Ascending aorta (tissue), 2 donors: ENCODE measurements at regions of chr10 and their contacts with region 1.

Region 1: DNA sequence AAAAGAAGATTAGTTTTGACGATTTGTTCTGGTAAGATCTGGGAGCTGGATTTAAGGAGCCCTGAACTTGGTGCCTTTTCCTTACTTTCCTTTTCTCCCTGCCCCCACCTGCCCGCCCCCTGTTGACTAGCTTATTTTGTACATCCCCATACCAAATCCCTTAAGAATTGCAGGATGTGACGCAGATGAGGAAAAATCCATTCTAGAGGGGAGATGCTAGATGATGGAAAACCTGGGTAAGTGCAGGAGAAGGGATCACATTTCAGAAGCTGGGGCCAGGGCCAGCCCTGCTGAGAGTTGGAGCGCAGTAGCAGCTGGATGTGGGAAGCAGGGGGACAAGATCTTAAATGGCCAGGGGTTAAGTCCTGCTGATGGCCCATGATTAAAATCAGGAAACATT is 93.9 kb downstream of the CCDC3 start:
- DNase-seq: no peak
- H3K4me3 ChIP-seq: no peak overlapping the region
- H3K27ac ChIP-seq: peak overlapping the region; percentile 90 to 91
- H3K4me1 ChIP-seq: peaks cover 4 to 31% of the 10 kb centered on the region in 2 donors
- H3K27me3 ChIP-seq: no peaks in the 10 kb centered on the region
- CTCF ChIP-seq: no peak

Region 2: DNA sequence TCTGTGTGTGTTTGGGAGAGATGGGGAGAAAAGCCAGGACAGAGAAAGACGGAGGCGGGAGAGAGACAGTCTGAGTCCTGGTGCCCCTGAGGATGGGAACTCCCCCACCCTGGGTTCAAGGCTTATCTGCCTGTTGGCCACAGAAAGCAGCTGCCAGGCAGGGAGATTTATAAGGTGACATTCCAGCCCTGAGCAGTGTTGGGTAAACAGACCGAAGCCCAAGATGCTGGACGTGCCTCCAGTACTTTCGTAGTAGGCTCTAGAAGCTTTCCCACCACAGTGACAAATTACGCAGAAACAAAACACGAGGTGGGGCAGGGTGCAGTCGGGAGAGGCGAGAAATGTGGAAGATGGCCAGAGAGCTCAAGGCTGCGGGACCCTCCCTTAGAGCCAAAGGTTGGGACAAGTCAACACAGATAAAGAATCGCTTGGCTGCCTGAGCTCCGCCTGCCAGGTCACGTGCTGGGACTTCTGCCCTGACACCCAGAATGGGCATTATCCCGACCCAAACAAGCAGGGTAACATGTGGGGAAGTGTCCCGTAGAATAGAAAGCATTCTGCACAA is 52.8 kb after region 1 on chr10:
- intact Hi-C with region 1: loop called (anchors 5 kb)
- DNase-seq: peak in 1 of 2 donors; percentile 73
- H3K4me3 ChIP-seq: peak overlapping the region; percentile 29 to 57
- H3K27ac ChIP-seq: peak overlapping the region; percentile 90 to 91
- H3K4me1 ChIP-seq: peaks cover 8 to 20% of the 10 kb centered on the region in 2 donors
- H3K27me3 ChIP-seq: no peaks in the 10 kb centered on the region
- CTCF ChIP-seq: no peak

Region 3: GRCh38 chr10:13001041-13001886 is 93.6 kb after region 1 on chr10 and contains the start of gene CCDC3:
- intact Hi-C with region 1: loop called (anchors 2 kb)
- DNase-seq: peak in 1 of 2 donors; percentile 67
- H3K4me3 ChIP-seq: peak within 1 kb of the TSS; percentile 68 to 75
- H3K27ac ChIP-seq: peak within 1 kb of the TSS; percentile 70 to 81
- H3K4me1 ChIP-seq: peaks cover 2 to 12% of the 10 kb centered on the region in 2 donors
- H3K27me3 ChIP-seq: no peaks in the 10 kb centered on the region
- CTCF ChIP-seq: no peak
- total RNA-seq, gene CCDC3: 86.0 TPM